A673 (cell line): ENCODE measurements at regions of chr5 and their contacts with region 1.

Region 1: DNA sequence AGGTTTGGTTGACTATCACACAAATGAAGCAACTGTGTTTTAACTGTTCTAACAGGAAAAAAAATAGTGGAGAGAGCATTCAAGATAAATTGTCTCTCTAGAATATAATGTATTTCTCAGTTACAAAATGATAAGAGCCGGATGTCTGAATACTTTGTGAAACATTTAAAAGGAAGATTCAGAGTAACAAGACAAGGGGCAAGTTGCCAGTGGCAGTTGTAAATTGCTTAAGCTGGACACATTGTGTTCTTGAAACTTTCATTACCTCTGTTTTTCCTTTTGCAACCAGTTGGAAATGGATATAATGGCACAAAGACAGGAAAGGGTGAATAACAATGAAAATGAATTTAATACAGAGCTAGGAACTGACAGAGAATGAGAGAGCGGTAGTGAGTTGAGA is 15.2 kb upstream of the TBCA start:
- DNase-seq: no peak
- H3K4me3 ChIP-seq: no peak overlapping the region
- H3K27ac ChIP-seq: no peak overlapping the region
- H3K4me1 ChIP-seq: no peaks in the 10 kb centered on the region
- H3K27me3 ChIP-seq: peaks cover 48% of the 10 kb centered on the region
- CTCF ChIP-seq: no peak

Region 2: DNA sequence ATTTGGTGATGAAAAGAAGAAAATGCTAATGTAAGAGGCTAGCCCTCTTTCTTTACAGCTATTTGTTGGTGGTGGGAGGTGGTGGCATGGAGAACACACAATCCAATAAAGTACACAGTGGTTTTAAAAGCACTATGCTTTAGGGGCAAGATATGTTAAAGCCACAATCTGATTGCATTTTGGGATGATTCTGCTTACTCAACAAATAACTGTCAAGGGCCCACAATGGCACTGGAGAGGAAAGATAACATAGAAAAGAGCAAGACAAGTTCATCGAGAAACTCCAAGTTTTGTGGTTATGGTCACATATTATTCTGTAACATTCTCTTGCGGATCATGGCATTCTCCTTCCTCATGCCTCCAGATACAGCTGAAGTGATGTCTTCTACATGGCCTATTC is 191.7 kb before region 1 on chr5:
- CTCF ChIA-PET with region 1: interaction called, 12 read pairs
- POLR2A ChIA-PET with region 1: no interaction called
- intact Hi-C with region 1: no loop called
- DNase-seq: no peak
- H3K4me3 ChIP-seq: no peak overlapping the region
- H3K27ac ChIP-seq: no peak overlapping the region
- H3K4me1 ChIP-seq: no peaks in the 10 kb centered on the region
- H3K27me3 ChIP-seq: peaks cover 46% of the 10 kb centered on the region
- CTCF ChIP-seq: no peak

Region 3: GRCh38 chr5:79235634-79236363 is 1444.4 kb after region 1 on chr5 and contains the start of gene JMY:
- CTCF ChIA-PET with region 1: no interaction called
- POLR2A ChIA-PET with region 1: no interaction called
- intact Hi-C with region 1: no loop called
- DNase-seq: peak; percentile 91
- H3K4me3 ChIP-seq: peak within 1 kb of the TSS; percentile 81
- H3K27ac ChIP-seq: peak within 1 kb of the TSS; percentile 52
- H3K4me1 ChIP-seq: no peaks in the 10 kb centered on the region
- H3K27me3 ChIP-seq: peaks cover 13% of the 10 kb centered on the region
- CTCF ChIP-seq: 0 out of 2 replicates have a peak, but pooled peaks have one; percentile 14
- total RNA-seq, gene JMY: 3.5 and 4.0 TPM in 2 replicates